Ovary (tissue), 10 donors: ENCODE measurements at regions of chr3 and their contacts with region 1.

Region 1: GRCh38 chr3:49339945-49340800 is at the start of gene USP4:
- DNase-seq: peak; percentile 90 to 95 (median 91)
- H3K4me3 ChIP-seq: peak within 1 kb of the TSS; percentile 92
- H3K27ac ChIP-seq: peak within 1 kb of the TSS; percentile 40 to 92
- H3K4me1 ChIP-seq: peaks cover 5% of the 10 kb centered on the region
- H3K27me3 ChIP-seq: no peaks in the 10 kb centered on the region
- CTCF ChIP-seq: peak; percentile 11 to 74 (median 59)
- EP300 ChIP-seq: no peak
- POLR2A ChIP-seq: peak; percentile 57
- total RNA-seq, gene USP4: 12.5 to 71.7 (median 52.5) TPM

Region 2: GRCh38 chr3:49165771-49166751 is 174.1 kb before region 1 on chr3 and contains the start of gene CCDC71:
- intact Hi-C with region 1: loop called in 2 of 4 experiments (anchors 2 to 5 kb)
- DNase-seq: peak; percentile 70 to 89 (median 81)
- H3K4me3 ChIP-seq: peak within 1 kb of the TSS; percentile 77
- H3K27ac ChIP-seq: peak within 1 kb of the TSS; percentile 88 to 89
- H3K4me1 ChIP-seq: no peaks in the 10 kb centered on the region
- H3K27me3 ChIP-seq: no peaks in the 10 kb centered on the region
- CTCF ChIP-seq: no peak
- EP300 ChIP-seq: no peak
- POLR2A ChIP-seq: peak; percentile 70
- total RNA-seq, gene CCDC71: 24.8 to 39.0 (median 32.7) TPM

Region 3: GRCh38 chr3:49171119-49171774 is 168.9 kb before region 1 on chr3 and contains the start of gene KLHDC8B:
- intact Hi-C with region 1: loop called in 2 of 4 experiments (anchors 2 to 5 kb)
- DNase-seq: peak; percentile 90 to 93 (median 91)
- H3K4me3 ChIP-seq: peak within 1 kb of the TSS; percentile 72
- H3K27ac ChIP-seq: peak within 1 kb of the TSS; percentile 75 to 89
- H3K4me1 ChIP-seq: peaks cover 14% of the 10 kb centered on the region
- H3K27me3 ChIP-seq: no peaks in the 10 kb centered on the region
- CTCF ChIP-seq: peak; percentile 76 to 95 (median 94)
- EP300 ChIP-seq: no peak
- POLR2A ChIP-seq: peak; percentile 68
- total RNA-seq, gene KLHDC8B: 67.1 to 244 (median 131) TPM

Region 4: GRCh38 chr3:49387721-49388120 is 47.5 kb after region 1 on chr3:
- intact Hi-C with region 1: no loop called
- DNase-seq: no peak
- H3K4me3 ChIP-seq: no peak overlapping the region
- H3K27ac ChIP-seq: no peak overlapping the region
- H3K4me1 ChIP-seq: peaks cover 6% of the 10 kb centered on the region
- H3K27me3 ChIP-seq: no peaks in the 10 kb centered on the region
- CTCF ChIP-seq: no peak
- EP300 ChIP-seq: no peak
- POLR2A ChIP-seq: no peak